Mammary epithelial cell (primary cell): ENCODE measurements at regions of chr9 and their contacts with region 1.

Region 1: GRCh38 chr9:37350486-37351190 is 71.9 kb upstream of the GRHPR start:
- DNase-seq: peak; percentile 94
- H3K4me3 ChIP-seq: no peak overlapping the region
- H3K27ac ChIP-seq: peak overlapping the region; percentile 92
- H3K4me1 ChIP-seq: peaks cover 15% of the 10 kb centered on the region
- H3K27me3 ChIP-seq: no peaks in the 10 kb centered on the region
- CTCF ChIP-seq: no peak

Region 2: DNA sequence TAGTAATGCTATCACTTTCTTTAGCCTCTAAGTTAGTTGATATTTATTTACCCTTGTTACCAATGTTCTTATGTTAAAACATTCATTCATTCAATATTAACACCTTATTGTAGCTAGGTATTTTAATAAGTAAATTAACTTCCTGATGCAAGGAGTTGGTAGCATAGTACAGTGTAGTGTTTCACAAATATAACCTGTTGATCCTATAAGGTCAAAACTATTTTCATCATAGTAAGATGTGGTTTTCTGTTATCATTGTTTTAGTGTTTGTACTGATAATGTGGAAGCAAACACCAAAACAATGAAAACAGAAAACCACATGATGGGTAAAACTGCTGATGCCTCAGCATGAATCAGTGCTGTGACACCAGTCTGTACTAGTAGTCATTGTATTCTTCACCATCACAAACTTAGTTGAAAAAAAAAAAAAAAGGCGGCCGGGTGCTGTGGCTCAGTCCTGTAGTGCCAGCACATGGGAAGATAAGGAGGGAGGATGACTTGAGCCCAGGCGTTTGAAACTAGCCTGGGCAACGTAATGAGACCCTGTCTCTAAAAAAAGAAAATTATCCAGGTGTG is 193.8 kb before region 1 on chr9:
- CTCF ChIA-PET with region 1: no interaction called
- dilution Hi-C with region 1: no loop called
- in situ Hi-C with region 1: no loop called
- intact Hi-C with region 1: loop called (anchors 10 kb)
- DNase-seq: peak; percentile 71
- H3K4me3 ChIP-seq: no peak overlapping the region
- H3K27ac ChIP-seq: no peak overlapping the region
- H3K4me1 ChIP-seq: no peaks in the 10 kb centered on the region
- H3K27me3 ChIP-seq: no peaks in the 10 kb centered on the region
- CTCF ChIP-seq: no peak

Region 3: GRCh38 chr9:37293664-37294524 is 56.7 kb before region 1 on chr9:
- CTCF ChIA-PET with region 1: no interaction called
- dilution Hi-C with region 1: no loop called
- in situ Hi-C with region 1: no loop called
- intact Hi-C with region 1: loop called (anchors 10 kb)
- DNase-seq: no peak
- H3K4me3 ChIP-seq: no peak overlapping the region
- H3K27ac ChIP-seq: no peak overlapping the region
- H3K4me1 ChIP-seq: peaks cover 23% of the 10 kb centered on the region
- H3K27me3 ChIP-seq: no peaks in the 10 kb centered on the region
- CTCF ChIP-seq: no peak